Motor neuron (in vitro differentiated cells): ENCODE measurements at regions of chr15 and their contacts with region 1.

Region 1: GRCh38 chr15:51776952-51777574 is 25.7 kb downstream of the TMOD2 start:
- ATAC-seq: peak; percentile 58 to 97 (median 79)
- H3K4me3 ChIP-seq: no peak overlapping the region
- H3K27ac ChIP-seq: no peak overlapping the region
- H3K4me1 ChIP-seq: no peaks in the 10 kb centered on the region

Region 2: DNA sequence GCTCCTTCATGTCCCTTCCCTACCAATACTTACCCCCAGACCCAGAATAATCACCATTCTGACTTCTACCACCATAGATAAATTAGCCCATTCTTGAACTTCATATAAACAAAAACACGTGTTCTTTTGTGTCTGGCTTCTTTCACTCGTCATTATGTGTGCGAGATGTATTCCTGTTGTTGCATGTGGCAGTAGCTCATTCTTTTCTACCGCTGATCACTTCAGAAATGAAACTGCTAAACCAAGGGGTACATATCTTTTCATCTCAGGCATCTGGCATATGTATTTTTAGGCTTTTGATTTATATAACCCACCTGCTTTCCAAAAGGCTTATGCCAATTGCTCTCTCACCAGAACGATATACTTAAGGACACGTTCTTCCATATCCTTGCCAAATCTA is 109.6 kb before region 1 on chr15:
- in situ Hi-C with region 1: loop called in 3 of 9 experiments (anchors 10 to 25 kb)
- ATAC-seq: no peak
- H3K4me3 ChIP-seq: no peak overlapping the region
- H3K27ac ChIP-seq: no peak overlapping the region
- H3K4me1 ChIP-seq: peaks cover 0 to 12% of the 10 kb centered on the region in 2 donors